Aorta (tissue), 5 donors: ENCODE measurements at regions of chr1 and their contacts with region 1.

Region 1: DNA sequence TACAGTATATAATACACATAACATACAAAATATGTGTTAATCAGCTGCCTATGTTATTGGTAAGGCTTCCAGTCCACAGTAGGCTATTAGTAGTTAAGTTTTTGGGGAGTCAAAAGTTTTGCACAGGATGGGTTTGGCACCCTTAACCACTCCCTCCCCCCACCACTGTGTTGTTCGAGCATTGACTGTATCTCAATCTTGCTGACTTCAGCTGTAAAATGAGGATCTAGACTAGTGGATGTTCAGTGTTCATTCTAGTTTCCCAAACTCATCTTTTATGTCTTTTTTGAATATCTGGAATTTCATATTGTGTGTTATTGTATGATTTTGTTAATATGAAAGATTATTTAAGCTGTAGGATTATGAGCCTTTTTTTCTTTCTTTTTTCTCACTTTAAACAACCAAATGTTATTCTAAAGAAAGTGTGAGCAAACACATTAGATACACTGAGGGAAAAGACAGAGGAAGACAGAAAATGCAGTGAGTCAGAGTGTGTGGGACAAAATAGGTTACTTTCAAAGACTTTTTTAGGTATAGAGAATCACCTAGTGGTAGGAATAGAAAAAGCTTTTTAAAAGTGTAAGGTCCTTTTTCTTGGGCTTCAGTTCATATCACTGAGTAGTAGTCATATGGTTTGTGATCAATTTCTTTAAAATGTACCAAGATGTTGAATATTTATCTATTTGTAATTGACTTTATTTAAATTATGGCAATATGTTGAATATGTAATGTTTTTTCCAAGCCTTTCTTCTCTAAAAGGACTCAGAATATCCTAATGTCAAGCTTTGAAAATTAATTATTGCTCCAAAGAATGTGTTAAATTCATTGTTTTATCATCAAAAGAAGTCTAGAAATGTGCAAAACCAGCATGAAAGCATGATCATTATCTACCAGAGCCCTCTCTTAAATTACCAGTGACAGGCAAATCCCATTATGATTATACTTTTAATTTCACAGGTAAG is 17.9 kb upstream of the CENPF start:
- DNase-seq: no peak
- ATAC-seq: peak; percentile 65
- H3K4me3 ChIP-seq: no peak overlapping the region
- H3K27ac ChIP-seq: no peak overlapping the region
- H3K4me1 ChIP-seq: no peaks in the 10 kb centered on the region
- H3K27me3 ChIP-seq: no peaks in the 10 kb centered on the region

Region 2: GRCh38 chr1:214261206-214262123 is 323.6 kb before region 1 on chr1:
- intact Hi-C with region 1: loop called (anchors 5 kb)
- DNase-seq: peak; percentile 85 to 94
- ATAC-seq: peak; percentile 94
- H3K4me3 ChIP-seq: no peak overlapping the region
- H3K27ac ChIP-seq: no peak overlapping the region
- H3K4me1 ChIP-seq: no peaks in the 10 kb centered on the region
- H3K27me3 ChIP-seq: peaks cover 0 to 3% of the 10 kb centered on the region in 2 donors

Region 3: GRCh38 chr1:214386747-214387146 is 198.3 kb before region 1 on chr1:
- intact Hi-C with region 1: loop called (anchors 2 to 5 kb)
- DNase-seq: no peak
- ATAC-seq: peak; percentile 60
- H3K4me3 ChIP-seq: no peak overlapping the region
- H3K27ac ChIP-seq: peak overlapping the region in 1 of 2 donors; percentile 7
- H3K4me1 ChIP-seq: no peaks in the 10 kb centered on the region
- H3K27me3 ChIP-seq: no peaks in the 10 kb centered on the region

Region 4: DNA sequence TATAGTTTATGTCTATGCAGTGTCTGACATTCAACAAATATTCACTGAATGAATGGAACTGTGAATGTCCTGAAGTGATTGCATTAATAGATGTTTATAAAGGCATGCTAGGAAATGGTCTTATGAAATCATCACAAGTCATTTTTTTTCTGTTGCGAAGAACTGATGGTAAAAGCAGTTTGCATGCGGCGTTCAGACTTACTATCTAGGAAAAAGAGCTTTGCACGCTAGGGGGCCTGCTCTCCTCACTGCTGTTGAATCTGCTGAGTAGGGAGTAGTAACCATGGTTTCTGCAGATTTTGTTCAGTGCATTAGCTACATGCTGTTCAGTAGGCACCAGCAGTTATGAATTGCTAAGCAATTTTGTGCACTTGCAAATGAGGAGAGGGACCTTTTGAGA is 75.8 kb after region 1 on chr1:
- intact Hi-C with region 1: no loop called
- DNase-seq: peak in 1 of 2 donors; percentile 48
- ATAC-seq: no peak
- H3K4me3 ChIP-seq: no peak overlapping the region
- H3K27ac ChIP-seq: no peak overlapping the region
- H3K4me1 ChIP-seq: no peaks in the 10 kb centered on the region
- H3K27me3 ChIP-seq: no peaks in the 10 kb centered on the region

Region 5: GRCh38 chr1:214777364-214777763 is 192.3 kb after region 1 on chr1:
- intact Hi-C with region 1: no loop called
- DNase-seq: no peak
- ATAC-seq: no peak
- H3K4me3 ChIP-seq: no peak overlapping the region
- H3K27ac ChIP-seq: no peak overlapping the region
- H3K4me1 ChIP-seq: no peaks in the 10 kb centered on the region
- H3K27me3 ChIP-seq: no peaks in the 10 kb centered on the region